CD8-positive, alpha-beta T cell (primary cell): ENCODE measurements at regions of chr3 and their contacts with region 1.

Region 1: DNA sequence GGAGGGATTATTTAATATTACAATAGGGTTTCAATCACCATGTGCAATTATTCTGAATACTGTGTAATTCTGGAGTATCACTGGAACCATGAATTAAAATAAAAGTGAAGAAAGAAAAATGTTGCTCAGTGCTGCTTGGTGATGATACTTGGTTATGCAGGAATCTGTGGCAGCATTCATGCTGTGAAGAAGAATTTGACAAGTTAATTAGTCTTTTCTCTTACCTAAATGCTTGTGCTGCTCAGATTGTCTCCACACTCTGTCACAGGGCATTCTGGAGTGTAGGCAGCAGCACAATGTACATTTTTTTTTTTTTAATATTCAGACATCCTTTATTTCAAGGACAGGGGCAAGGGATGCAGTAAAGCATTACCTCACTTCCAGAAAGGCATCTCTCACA is 749.3 kb upstream of the CADM2 start:
- DNase-seq: no peak
- ATAC-seq: no peak
- H3K4me3 ChIP-seq: no peak overlapping the region
- H3K4me3 Mint-ChIP-seq: no peak overlapping the region
- H3K27ac ChIP-seq: no peak overlapping the region
- H3K27ac Mint-ChIP-seq: no peak overlapping the region
- H3K4me1 ChIP-seq: no peaks in the 10 kb centered on the region
- H3K4me1 Mint-ChIP-seq: no peaks in the 10 kb centered on the region
- H3K27me3 ChIP-seq: no peaks in the 10 kb centered on the region
- H3K27me3 Mint-ChIP-seq: no peaks in the 10 kb centered on the region
- CTCF ChIP-seq: no peak

Region 2: GRCh38 chr3:85193565-85193964 is 984.1 kb after region 1 on chr3:
- CTCF ChIA-PET with region 1: no interaction called
- POLR2A ChIA-PET with region 1: no interaction called
- intact Hi-C with region 1: loop called in 1 of 2 experiments (anchors 5 kb)
- DNase-seq: no peak
- ATAC-seq: no peak
- H3K4me3 ChIP-seq: no peak overlapping the region
- H3K4me3 Mint-ChIP-seq: no peak overlapping the region
- H3K27ac ChIP-seq: no peak overlapping the region
- H3K27ac Mint-ChIP-seq: no peak overlapping the region
- H3K4me1 ChIP-seq: no peaks in the 10 kb centered on the region
- H3K4me1 Mint-ChIP-seq: no peaks in the 10 kb centered on the region
- H3K27me3 ChIP-seq: no peaks in the 10 kb centered on the region
- H3K27me3 Mint-ChIP-seq: no peaks in the 10 kb centered on the region
- CTCF ChIP-seq: no peak